Activated B cell treated with CpG ODN at 0.5 μM for 24 hours (primary cell): ENCODE measurements at regions of chr7 and their contacts with region 1.

Region 1: DNA sequence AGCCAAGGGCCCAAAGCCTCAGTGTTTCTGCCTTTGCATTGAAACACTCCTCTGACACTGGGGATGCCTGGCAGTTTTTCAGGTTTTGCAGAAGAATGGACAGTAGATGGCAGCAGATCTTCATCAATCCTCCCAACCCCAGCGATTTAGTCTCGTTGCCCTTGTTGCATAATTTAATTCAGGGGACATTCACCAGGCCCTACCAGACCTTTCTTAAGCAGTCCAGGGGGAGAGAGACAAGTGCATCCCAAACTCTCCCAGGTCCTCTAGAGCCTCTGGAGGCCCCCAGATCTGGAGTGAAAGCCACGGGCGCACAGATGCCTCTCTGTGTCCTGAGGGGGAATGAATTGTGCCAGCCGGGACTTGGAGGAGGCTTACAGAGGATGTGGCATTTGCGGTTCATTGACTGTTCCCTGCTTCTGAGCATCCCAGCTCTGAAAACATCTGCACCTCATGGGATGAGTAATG is 29.6 kb downstream of the MINDY4 start:
- DNase-seq: no peak
- ATAC-seq: peak; percentile 32
- H3K4me3 Mint-ChIP-seq: no peak overlapping the region
- H3K27ac Mint-ChIP-seq: no peak overlapping the region
- H3K4me1 Mint-ChIP-seq: peaks cover 26% of the 10 kb centered on the region
- H3K27me3 Mint-ChIP-seq: no peaks in the 10 kb centered on the region
- CTCF ChIP-seq: no peak

Region 2: GRCh38 chr7:30974605-30975255 is 173.9 kb after region 1 on chr7:
- CTCF ChIA-PET with region 1: interaction called, 3 read pairs
- POLR2A ChIA-PET with region 1: no interaction called
- intact Hi-C with region 1: loop called (anchors 1 kb)
- DNase-seq: no peak
- ATAC-seq: peak; percentile 85
- H3K4me3 Mint-ChIP-seq: no peak overlapping the region
- H3K27ac Mint-ChIP-seq: no peak overlapping the region
- H3K4me1 Mint-ChIP-seq: peaks cover 14% of the 10 kb centered on the region
- H3K27me3 Mint-ChIP-seq: peaks cover 9% of the 10 kb centered on the region
- CTCF ChIP-seq: no peak

Region 3: DNA sequence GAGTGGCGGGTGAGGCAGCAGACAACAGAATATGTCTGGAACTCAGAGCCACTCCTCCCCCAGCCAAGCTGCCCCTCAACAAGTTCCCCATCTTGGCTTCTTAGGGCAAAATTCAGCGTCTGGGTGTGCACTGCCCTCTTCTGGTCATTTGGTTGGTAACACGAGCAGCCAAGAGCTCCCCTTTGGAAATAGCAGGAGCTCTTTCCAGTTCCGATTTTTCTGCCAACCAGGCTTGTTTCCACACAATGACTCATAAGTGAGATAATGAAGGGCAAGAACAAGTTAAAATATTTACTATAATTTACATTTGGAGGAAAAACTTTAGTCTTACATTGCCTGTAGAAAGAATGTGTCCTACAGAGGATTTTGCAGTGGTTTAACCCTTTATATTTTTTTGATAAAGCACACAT is 321.8 kb after region 1 on chr7:
- CTCF ChIA-PET with region 1: interaction called, 17 read pairs
- POLR2A ChIA-PET with region 1: no interaction called
- intact Hi-C with region 1: no loop called
- DNase-seq: no peak
- ATAC-seq: no peak
- H3K4me3 Mint-ChIP-seq: no peak overlapping the region
- H3K27ac Mint-ChIP-seq: no peak overlapping the region
- H3K4me1 Mint-ChIP-seq: no peaks in the 10 kb centered on the region
- H3K27me3 Mint-ChIP-seq: peaks cover 3% of the 10 kb centered on the region
- CTCF ChIP-seq: no peak

Region 4: GRCh38 chr7:31443457-31443856 is 642.6 kb after region 1 on chr7:
- CTCF ChIA-PET with region 1: no interaction called
- POLR2A ChIA-PET with region 1: no interaction called
- intact Hi-C with region 1: loop called (anchors 5 kb)
- DNase-seq: no peak
- ATAC-seq: no peak
- H3K4me3 Mint-ChIP-seq: no peak overlapping the region
- H3K27ac Mint-ChIP-seq: no peak overlapping the region
- H3K4me1 Mint-ChIP-seq: no peaks in the 10 kb centered on the region
- H3K27me3 Mint-ChIP-seq: peaks cover 3% of the 10 kb centered on the region
- CTCF ChIP-seq: no peak

Region 5: DNA sequence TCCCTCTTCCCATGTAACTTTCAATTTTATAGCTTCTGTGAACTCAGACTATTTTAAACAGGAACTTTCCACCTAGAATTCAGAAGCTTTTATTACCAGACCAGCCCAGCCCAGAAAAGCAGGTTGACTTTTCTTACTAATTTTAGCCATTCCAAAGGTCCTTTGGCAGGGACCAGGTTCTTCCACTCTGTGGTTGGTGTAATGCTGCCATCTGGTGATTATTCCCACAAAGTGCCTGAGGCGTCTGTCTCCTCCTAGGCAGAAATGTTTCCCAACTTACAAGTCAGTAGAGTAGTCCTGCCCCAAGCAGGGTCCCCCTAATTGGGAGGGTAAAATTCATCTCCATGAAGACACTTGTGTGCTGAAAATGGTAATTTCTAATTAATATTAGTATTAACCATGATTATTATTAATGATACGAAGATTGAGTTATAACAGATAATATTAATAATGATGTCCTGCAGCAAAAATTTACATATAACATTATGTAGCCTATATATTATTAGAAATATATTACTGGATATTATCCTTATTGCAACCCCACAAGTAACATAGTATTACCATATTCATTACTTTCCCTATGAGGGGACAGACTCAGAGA is 833.2 kb after region 1 on chr7:
- CTCF ChIA-PET with region 1: no interaction called
- POLR2A ChIA-PET with region 1: no interaction called
- intact Hi-C with region 1: loop called (anchors 10 kb)
- DNase-seq: no peak
- ATAC-seq: no peak
- H3K4me3 Mint-ChIP-seq: no peak overlapping the region
- H3K27ac Mint-ChIP-seq: no peak overlapping the region
- H3K4me1 Mint-ChIP-seq: no peaks in the 10 kb centered on the region
- H3K27me3 Mint-ChIP-seq: peaks cover 4% of the 10 kb centered on the region
- CTCF ChIP-seq: no peak

Region 6: DNA sequence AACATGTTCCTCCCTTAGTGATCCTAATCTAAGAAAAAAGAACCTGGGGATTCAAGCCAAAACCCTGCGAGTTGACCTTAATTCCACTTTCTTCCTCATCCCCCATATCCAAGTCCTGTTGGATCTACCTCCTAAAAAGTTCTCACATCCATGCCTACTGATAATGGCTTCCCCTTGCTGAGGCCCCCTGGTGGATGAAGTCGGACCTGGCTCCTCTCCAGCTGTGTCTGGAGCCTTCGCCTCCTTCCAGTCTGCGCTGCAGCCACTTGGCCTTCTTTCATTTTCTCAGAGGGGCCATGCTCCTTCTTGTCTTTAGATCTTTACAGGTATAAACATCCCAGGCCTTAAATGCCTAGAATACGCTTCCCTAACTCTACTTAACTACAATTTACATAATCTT is 1261.3 kb after region 1 on chr7:
- CTCF ChIA-PET with region 1: no interaction called
- POLR2A ChIA-PET with region 1: no interaction called
- intact Hi-C with region 1: loop called (anchors 5 kb)
- DNase-seq: no peak
- ATAC-seq: no peak
- H3K4me3 Mint-ChIP-seq: no peak overlapping the region
- H3K27ac Mint-ChIP-seq: no peak overlapping the region
- H3K4me1 Mint-ChIP-seq: no peaks in the 10 kb centered on the region
- H3K27me3 Mint-ChIP-seq: no peaks in the 10 kb centered on the region
- CTCF ChIP-seq: no peak